Gastrocnemius medialis (tissue), 4 donors: ENCODE measurements at regions of chr3 and their contacts with region 1.

Region 1: GRCh38 chr3:30199096-30199759 is 407.2 kb upstream of the TGFBR2 start:
- DNase-seq: peak; percentile 32 to 38
- ATAC-seq: peak; percentile 41 to 60
- H3K4me3 ChIP-seq: no peak overlapping the region
- H3K27ac ChIP-seq: no peak overlapping the region
- H3K4me1 ChIP-seq: peaks cover 0 to 27% of the 10 kb centered on the region in 2 donors
- H3K27me3 ChIP-seq: no peaks in the 10 kb centered on the region
- CTCF ChIP-seq: peak; percentile 73 to 91 (median 82)
- POLR2A ChIP-seq: no peak

Region 2: GRCh38 chr3:28916713-28917499 is 1282.3 kb before region 1 on chr3:
- in situ Hi-C with region 1: no loop called
- intact Hi-C with region 1: loop called (anchors 5 kb)
- DNase-seq: peak; percentile 32 to 49
- ATAC-seq: peak; percentile 92 to 94
- H3K4me3 ChIP-seq: peak overlapping the region; percentile 45 to 53 (median 50)
- H3K27ac ChIP-seq: peak overlapping the region; percentile 58 to 70 (median 60)
- H3K4me1 ChIP-seq: peaks cover 15 to 16% of the 10 kb centered on the region in 2 donors
- H3K27me3 ChIP-seq: no peaks in the 10 kb centered on the region
- CTCF ChIP-seq: peak in 4 of 5 experiments; percentile 25 to 63 (median 60)
- POLR2A ChIP-seq: no peak

Region 3: DNA sequence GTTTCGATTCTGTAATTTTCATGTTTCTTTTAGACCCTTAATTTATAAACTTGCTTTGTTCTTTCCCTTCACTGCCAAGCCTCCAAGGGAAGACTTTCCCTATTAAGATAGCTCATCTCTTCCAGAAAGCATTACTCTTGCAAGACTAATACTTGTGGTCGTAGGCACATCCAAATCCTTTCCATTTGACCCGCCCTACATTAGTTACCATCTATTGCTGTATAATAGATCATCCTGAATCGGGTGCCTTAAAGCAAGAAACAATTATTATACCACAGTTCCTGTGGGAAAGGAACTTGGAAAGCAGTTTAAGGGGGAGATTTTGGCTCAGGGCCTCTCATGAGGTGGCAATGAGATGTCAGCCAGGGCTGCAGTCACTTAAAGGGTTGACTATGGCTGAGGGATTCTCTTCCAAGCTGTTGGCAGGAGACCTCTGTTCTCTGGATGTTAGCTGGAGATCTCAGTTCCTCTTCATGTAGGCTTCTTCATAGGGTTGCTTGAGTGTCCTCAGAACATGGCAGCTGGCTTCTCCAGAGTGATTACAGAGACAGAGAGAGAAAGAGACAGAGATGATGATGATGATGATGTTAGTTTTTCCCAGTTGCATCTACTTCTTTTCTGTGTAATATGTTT is 163.2 kb before region 1 on chr3:
- in situ Hi-C with region 1: loop called (anchors 5 to 10 kb)
- intact Hi-C with region 1: no loop called
- DNase-seq: no peak
- ATAC-seq: no peak
- H3K4me3 ChIP-seq: no peak overlapping the region
- H3K27ac ChIP-seq: no peak overlapping the region
- H3K4me1 ChIP-seq: no peaks in the 10 kb centered on the region
- H3K27me3 ChIP-seq: no peaks in the 10 kb centered on the region
- CTCF ChIP-seq: no peak
- POLR2A ChIP-seq: no peak

Region 4: DNA sequence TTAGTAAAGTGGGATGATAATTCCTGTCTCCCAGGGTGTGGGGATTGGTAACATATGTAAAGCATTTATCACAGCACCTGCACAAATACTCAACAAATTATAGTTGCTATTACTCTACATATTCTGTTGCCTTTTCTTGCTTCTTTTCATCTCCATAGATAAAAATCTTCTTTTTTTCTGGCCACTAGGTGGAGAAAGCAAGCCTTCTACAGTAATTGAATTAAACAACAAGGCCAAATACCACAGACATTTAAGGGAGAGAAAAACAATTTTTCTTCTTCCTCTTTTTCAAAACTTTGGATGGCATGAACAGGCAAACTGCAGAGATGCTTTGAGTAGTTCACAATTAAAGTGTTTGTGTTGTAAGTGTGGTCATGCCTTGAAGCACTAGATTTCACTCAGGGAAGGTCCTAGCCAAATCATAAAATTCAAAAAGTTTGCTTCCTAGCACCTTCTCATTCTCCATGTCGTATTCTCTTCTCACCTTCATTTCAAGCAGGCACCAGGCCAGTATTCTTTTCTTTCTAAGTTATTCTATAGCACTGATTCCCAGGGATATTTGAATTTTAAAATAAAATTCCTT is 86.2 kb before region 1 on chr3:
- in situ Hi-C with region 1: loop called in 2 of 4 experiments (anchors 5 to 10 kb)
- intact Hi-C with region 1: loop called (anchors 2 kb)
- DNase-seq: no peak
- ATAC-seq: no peak
- H3K4me3 ChIP-seq: no peak overlapping the region
- H3K27ac ChIP-seq: no peak overlapping the region
- H3K4me1 ChIP-seq: no peaks in the 10 kb centered on the region
- H3K27me3 ChIP-seq: no peaks in the 10 kb centered on the region
- CTCF ChIP-seq: peak; percentile 38 to 64 (median 50)
- POLR2A ChIP-seq: no peak

Region 5: GRCh38 chr3:30693470-30694120 is 494.4 kb after region 1 on chr3:
- in situ Hi-C with region 1: loop called in 1 of 4 experiments (anchors 10 kb)
- intact Hi-C with region 1: loop called (anchors 10 kb)
- DNase-seq: no peak
- ATAC-seq: peak; percentile 82
- H3K4me3 ChIP-seq: no peak overlapping the region
- H3K27ac ChIP-seq: no peak overlapping the region
- H3K4me1 ChIP-seq: peaks cover 40 to 46% of the 10 kb centered on the region in 2 donors
- H3K27me3 ChIP-seq: no peaks in the 10 kb centered on the region
- CTCF ChIP-seq: peak; percentile 59 to 79 (median 76)
- POLR2A ChIP-seq: no peak